Activated T-helper 1 cell treated with anti-CD3 and anti-CD28 coated beads, Interleukin-12 subunit alpha, Interleukin-12 subunit beta, Interleukin-2, Interleukin-4 antibody, amounts not matched to agents 30 ng/mL and 10 ng/mL and 1 ng/mL, durations not matched to agents 14 hours and 24 hours and 36 hours (primary cell): ENCODE measurements at regions of chr11 and their contacts with region 1.

Region 1: DNA sequence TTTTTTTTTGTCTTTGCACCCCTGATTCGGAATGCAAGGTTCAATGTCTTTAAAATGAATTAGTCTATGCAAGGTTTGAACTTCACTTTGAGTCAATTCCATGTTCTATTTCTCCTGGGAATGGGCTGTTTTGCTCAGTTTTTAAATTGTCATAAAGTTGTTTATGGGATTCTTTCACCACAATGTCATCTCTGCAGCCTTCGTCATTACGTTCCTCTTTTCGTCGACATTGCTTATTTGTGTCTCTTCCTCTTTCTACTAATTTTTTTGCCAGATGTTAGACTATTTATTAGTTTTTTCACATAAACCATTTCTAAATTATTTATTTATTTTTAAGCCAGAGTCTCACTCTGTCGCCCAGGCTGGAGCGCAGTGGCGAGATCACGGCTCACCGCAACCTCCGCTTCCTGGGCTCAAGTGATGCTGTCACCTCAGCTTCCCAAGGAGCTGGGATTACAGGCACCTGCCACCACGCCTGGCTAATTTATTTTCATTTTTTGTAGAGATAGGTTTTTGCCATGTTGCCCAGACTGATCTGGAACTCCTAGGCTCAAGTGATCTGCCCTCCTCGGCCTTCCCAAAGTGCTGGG is 7.1 kb upstream of the TNNT3 start:
- DNase-seq: no peak
- H3K4me3 Mint-ChIP-seq: no peak overlapping the region
- H3K27ac Mint-ChIP-seq: no peak overlapping the region
- H3K4me1 Mint-ChIP-seq: no peaks in the 10 kb centered on the region
- H3K27me3 Mint-ChIP-seq: no peaks in the 10 kb centered on the region

Region 2: GRCh38 chr11:1873048-1873812 is 39.2 kb before region 1 on chr11:
- intact Hi-C with region 1: no loop called
- DNase-seq: no peak
- H3K4me3 Mint-ChIP-seq: no peak overlapping the region
- H3K27ac Mint-ChIP-seq: no peak overlapping the region
- H3K4me1 Mint-ChIP-seq: peaks cover 9% of the 10 kb centered on the region
- H3K27me3 Mint-ChIP-seq: peaks cover 2% of the 10 kb centered on the region

Region 3: GRCh38 chr11:1939006-1939625 is 26.7 kb after region 1 on chr11:
- intact Hi-C with region 1: loop called (anchors 1 kb)
- DNase-seq: no peak
- H3K4me3 Mint-ChIP-seq: no peak overlapping the region
- H3K27ac Mint-ChIP-seq: no peak overlapping the region
- H3K4me1 Mint-ChIP-seq: peaks cover 10% of the 10 kb centered on the region
- H3K27me3 Mint-ChIP-seq: no peaks in the 10 kb centered on the region